Ascending aorta (tissue), 2 donors: ENCODE measurements at regions of chr2 and their contacts with region 1.

Region 1: GRCh38 chr2:152025678-152026287 is 73.1 kb downstream of the CACNB4 start:
- DNase-seq: peak; percentile 39 to 92
- H3K4me3 ChIP-seq: peak overlapping the region; percentile 43 to 49
- H3K27ac ChIP-seq: no peak overlapping the region
- H3K4me1 ChIP-seq: no peaks in the 10 kb centered on the region
- H3K27me3 ChIP-seq: no peaks in the 10 kb centered on the region
- CTCF ChIP-seq: peak; percentile 89 to 97 (median 95)

Region 2: GRCh38 chr2:151691631-151692030 is 334.2 kb before region 1 on chr2:
- intact Hi-C with region 1: loop called (anchors 5 kb)
- DNase-seq: no peak
- H3K4me3 ChIP-seq: no peak overlapping the region
- H3K27ac ChIP-seq: no peak overlapping the region
- H3K4me1 ChIP-seq: no peaks in the 10 kb centered on the region
- H3K27me3 ChIP-seq: no peaks in the 10 kb centered on the region
- CTCF ChIP-seq: peak in 1 of 3 experiments; percentile 25

Region 3: GRCh38 chr2:152012697-152013096 is 13.1 kb before region 1 on chr2:
- intact Hi-C with region 1: no loop called
- DNase-seq: no peak
- H3K4me3 ChIP-seq: no peak overlapping the region
- H3K27ac ChIP-seq: no peak overlapping the region
- H3K4me1 ChIP-seq: no peaks in the 10 kb centered on the region
- H3K27me3 ChIP-seq: no peaks in the 10 kb centered on the region
- CTCF ChIP-seq: no peak